ENCODE measurements at regions of chr2 and their contacts with region 1.

Region 1: GRCh38 chr2:58063641-58064040 is 17.0 kb downstream of the VRK2 start:
- DNase-seq: no peak
- ATAC-seq: peak; percentile 9
- H3K4me3 ChIP-seq: no peak overlapping the region
- H3K27ac ChIP-seq: peak overlapping the region; percentile 59
- H3K4me1 ChIP-seq: peaks cover 14% of the 10 kb centered on the region
- H3K27me3 ChIP-seq: no peaks in the 10 kb centered on the region
- CTCF ChIP-seq: no peak
- EP300 ChIP-seq: no peak
- POLR2A ChIP-seq: no peak
- RAD21 ChIP-seq: no peak

Region 2: DNA sequence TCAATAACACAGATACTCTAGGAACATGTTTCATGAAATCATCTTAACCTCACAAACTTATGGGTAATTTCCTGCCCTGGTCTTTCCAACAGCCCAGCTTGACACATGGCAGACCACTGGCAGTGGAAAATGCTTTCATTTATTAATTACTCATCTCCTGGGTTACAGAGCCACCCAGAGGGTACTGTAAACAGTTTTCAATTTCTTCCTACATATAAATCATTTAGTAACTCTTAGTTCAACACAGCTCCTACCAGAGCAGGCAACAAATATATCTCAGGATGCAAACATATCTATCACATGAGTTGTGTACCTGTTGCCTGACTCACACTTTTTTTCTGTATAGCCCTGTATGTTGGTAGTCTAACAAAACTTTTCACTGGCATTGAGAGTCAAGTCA is 116.2 kb before region 1 on chr2:
- CTCF ChIA-PET with region 1: no interaction called
- POLR2A ChIA-PET with region 1: no interaction called
- RAD21 ChIA-PET with region 1: no interaction called
- SMC1A ChIA-PET with region 1: no interaction called
- in situ Hi-C with region 1: no loop called
- intact Hi-C with region 1: no loop called
- DNase-seq: no peak
- ATAC-seq: peak; percentile 45; the same call in 2 of the 3 replicates
- H3K4me3 ChIP-seq: no peak overlapping the region
- H3K27ac ChIP-seq: no peak overlapping the region
- H3K4me1 ChIP-seq: no peaks in the 10 kb centered on the region
- H3K27me3 ChIP-seq: no peaks in the 10 kb centered on the region
- CTCF ChIP-seq: no peak
- EP300 ChIP-seq: no peak
- POLR2A ChIP-seq: no peak
- RAD21 ChIP-seq: no peak

Region 3: GRCh38 chr2:58073751-58074150 is 10.1 kb after region 1 on chr2:
- CTCF ChIA-PET with region 1: no interaction called
- POLR2A ChIA-PET with region 1: interaction called, 4 read pairs
- RAD21 ChIA-PET with region 1: interaction called, 4 read pairs
- SMC1A ChIA-PET with region 1: interaction called, 19 read pairs
- in situ Hi-C with region 1: no loop called
- intact Hi-C with region 1: no loop called
- DNase-seq: no peak
- ATAC-seq: no peak
- H3K4me3 ChIP-seq: no peak overlapping the region
- H3K27ac ChIP-seq: no peak overlapping the region
- H3K4me1 ChIP-seq: peaks cover 5% of the 10 kb centered on the region; the same call in 1 of the 2 replicates
- H3K27me3 ChIP-seq: no peaks in the 10 kb centered on the region
- CTCF ChIP-seq: no peak
- EP300 ChIP-seq: no peak
- POLR2A ChIP-seq: no peak
- RAD21 ChIP-seq: no peak

Region 4: GRCh38 chr2:58110765-58111164 is 47.1 kb after region 1 on chr2:
- CTCF ChIA-PET with region 1: no interaction called
- POLR2A ChIA-PET with region 1: no interaction called
- RAD21 ChIA-PET with region 1: no interaction called
- SMC1A ChIA-PET with region 1: no interaction called
- in situ Hi-C with region 1: no loop called
- intact Hi-C with region 1: no loop called
- DNase-seq: no peak
- ATAC-seq: no peak
- H3K4me3 ChIP-seq: no peak overlapping the region
- H3K27ac ChIP-seq: no peak overlapping the region
- H3K4me1 ChIP-seq: no peaks in the 10 kb centered on the region
- H3K27me3 ChIP-seq: no peaks in the 10 kb centered on the region
- CTCF ChIP-seq: 0 out of 6 replicates have a peak, but pooled peaks of 1 of the 3 experiments have one; percentile 2
- EP300 ChIP-seq: no peak
- POLR2A ChIP-seq: no peak
- RAD21 ChIP-seq: no peak

Region 5: GRCh38 chr2:58131191-58132011 is 67.8 kb after region 1 on chr2:
- CTCF ChIA-PET with region 1: no interaction called
- POLR2A ChIA-PET with region 1: no interaction called
- RAD21 ChIA-PET with region 1: no interaction called
- SMC1A ChIA-PET with region 1: no interaction called
- in situ Hi-C with region 1: no loop called
- intact Hi-C with region 1: loop called (anchors 5 kb)
- DNase-seq: no peak
- ATAC-seq: no peak
- H3K4me3 ChIP-seq: no peak overlapping the region
- H3K27ac ChIP-seq: no peak overlapping the region
- H3K4me1 ChIP-seq: no peaks in the 10 kb centered on the region
- H3K27me3 ChIP-seq: no peaks in the 10 kb centered on the region
- CTCF ChIP-seq: peak in 1 of 3 experiments; percentile 29; a peak in 1 of 6 replicates
- EP300 ChIP-seq: no peak
- POLR2A ChIP-seq: no peak
- RAD21 ChIP-seq: peak; percentile 33; the same call in 1 of the 2 replicates